HCT116 (cell line): ENCODE measurements at regions of chr6 and their contacts with region 1.

Region 1: GRCh38 chr6:2634139-2634964 is 116.4 kb downstream of the MYLK4 start:
- DNase-seq: peak; percentile 75
- ATAC-seq: peak; percentile 80
- H3K4me3 ChIP-seq: peak overlapping the region; percentile 37 to 52
- H3K27ac ChIP-seq: peak overlapping the region; percentile 73
- H3K4me1 ChIP-seq: peaks cover 46 to 61% of the 10 kb centered on the region in 2 experiments
- H3K27me3 ChIP-seq: no peaks in the 10 kb centered on the region
- CTCF ChIP-seq: peak in 2 of 3 experiments; percentile 95 to 96; a peak in 4 of 6 replicates
- POLR2A ChIP-seq: no peak
- RAD21 ChIP-seq: no peak

Region 2: DNA sequence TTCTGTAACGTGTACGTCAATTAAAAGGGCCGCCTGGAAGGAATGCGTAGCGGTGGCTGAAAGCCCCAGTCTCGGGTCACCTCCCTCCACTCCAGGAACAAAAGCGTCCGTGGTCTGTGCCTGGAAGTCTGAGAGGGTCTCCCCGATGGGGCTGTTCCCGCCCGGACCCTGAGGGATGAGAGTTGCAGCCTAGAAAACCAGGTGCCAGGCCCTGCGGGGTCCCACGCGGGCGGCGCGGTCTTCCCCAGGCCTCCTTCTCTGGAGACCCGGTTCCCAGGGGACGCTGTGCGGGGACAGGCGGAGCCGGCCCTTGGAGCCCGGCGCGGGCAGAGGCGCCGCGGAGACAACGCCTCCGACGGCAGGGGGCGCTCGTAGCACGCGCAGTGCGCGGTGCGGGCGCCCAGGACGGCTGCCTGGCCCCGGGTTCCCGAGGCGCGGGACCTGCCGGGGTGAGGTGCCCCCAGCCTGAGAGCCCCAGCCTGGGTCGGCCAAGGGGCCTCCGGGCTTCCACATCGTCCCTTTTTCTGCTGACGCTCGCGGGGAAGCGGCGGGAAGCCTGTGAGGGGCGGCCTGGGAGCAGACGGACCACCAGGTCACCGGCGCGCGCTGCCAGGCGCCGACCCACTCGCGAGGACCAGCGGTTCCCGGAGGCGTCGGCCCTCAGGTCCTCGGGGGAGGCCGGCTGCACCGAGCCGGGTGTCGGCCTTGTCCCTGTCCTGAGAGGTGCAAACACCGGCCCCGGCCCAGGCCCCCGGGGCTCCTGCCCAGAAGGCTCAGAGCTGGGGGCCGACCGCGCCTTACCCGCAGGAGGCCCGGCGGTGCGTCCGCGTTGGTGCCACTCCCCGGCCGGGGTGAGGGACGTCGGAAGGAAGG is 1030.0 kb before region 1 on chr6:
- CTCF ChIA-PET with region 1: interaction called, 6 read pairs
- POLR2A ChIA-PET with region 1: no interaction called
- RAD21 ChIA-PET with region 1: no interaction called
- intact Hi-C with region 1: loop called (anchors 1 kb)
- DNase-seq: no peak
- ATAC-seq: peak; percentile 93
- H3K4me3 ChIP-seq: peak overlapping the region; percentile 35 to 53
- H3K27ac ChIP-seq: no peak overlapping the region; the same call in 1 of the 2 replicates
- H3K4me1 ChIP-seq: peaks cover 0 to 16% of the 10 kb centered on the region in 2 experiments; a peak in 3 of 4 replicates
- H3K27me3 ChIP-seq: no peaks in the 10 kb centered on the region
- CTCF ChIP-seq: peak; percentile 77 to 84 (median 77)
- POLR2A ChIP-seq: no peak
- RAD21 ChIP-seq: peak; percentile 95

Region 3: DNA sequence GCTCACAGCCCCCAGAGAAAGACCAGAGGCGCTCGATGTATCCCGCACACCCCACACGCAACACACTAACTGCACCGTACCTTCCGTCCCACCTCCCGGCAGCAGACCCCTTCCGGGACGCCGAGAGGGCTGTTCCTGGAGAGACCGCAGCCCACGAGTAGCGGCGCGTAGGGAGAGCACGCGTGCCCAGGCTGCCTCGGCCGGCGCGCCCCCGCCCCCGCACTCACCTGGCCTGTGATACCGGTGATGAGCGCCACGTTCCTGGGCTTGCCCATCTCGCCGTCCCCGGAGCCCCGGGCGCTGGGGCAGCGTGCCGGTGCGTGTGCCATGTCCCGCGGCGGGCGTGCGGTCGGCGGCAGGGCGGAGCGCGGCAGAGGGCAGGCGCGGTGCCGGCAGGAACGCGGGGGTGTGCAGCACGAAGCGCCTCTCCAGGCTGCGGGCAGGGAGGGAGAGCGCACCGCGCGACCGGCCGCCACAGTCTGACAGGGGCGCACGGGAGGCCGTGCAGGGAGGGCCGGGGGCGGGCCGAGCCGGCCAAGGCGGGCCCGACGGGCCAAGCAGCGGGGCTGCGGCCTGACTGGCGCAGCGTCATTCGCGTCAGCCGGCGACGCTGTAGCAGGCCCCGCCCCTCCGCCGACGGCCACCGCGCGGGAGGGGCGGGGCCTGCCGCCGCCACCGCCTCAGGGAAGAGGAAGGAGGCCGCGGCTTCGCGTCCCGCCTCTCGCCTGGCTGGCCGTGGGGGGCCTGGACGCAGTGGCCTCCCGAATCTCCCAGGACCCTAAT is 389.1 kb before region 1 on chr6 and contains the start of gene GMDS:
- CTCF ChIA-PET with region 1: no interaction called
- POLR2A ChIA-PET with region 1: no interaction called
- RAD21 ChIA-PET with region 1: no interaction called
- intact Hi-C with region 1: loop called (anchors 5 kb)
- DNase-seq: peak; percentile 43
- ATAC-seq: peak; percentile 96
- H3K4me3 ChIP-seq: peak within 1 kb of the TSS; percentile 67 to 72
- H3K27ac ChIP-seq: peak within 1 kb of the TSS; percentile 68
- H3K4me1 ChIP-seq: peaks cover 4 to 13% of the 10 kb centered on the region in 2 experiments; a peak in 3 of 4 replicates
- H3K27me3 ChIP-seq: no peaks in the 10 kb centered on the region
- CTCF ChIP-seq: no peak
- POLR2A ChIP-seq: no peak
- RAD21 ChIP-seq: no peak
- total RNA-seq, gene GMDS: 34.4 TPM

Region 4: DNA sequence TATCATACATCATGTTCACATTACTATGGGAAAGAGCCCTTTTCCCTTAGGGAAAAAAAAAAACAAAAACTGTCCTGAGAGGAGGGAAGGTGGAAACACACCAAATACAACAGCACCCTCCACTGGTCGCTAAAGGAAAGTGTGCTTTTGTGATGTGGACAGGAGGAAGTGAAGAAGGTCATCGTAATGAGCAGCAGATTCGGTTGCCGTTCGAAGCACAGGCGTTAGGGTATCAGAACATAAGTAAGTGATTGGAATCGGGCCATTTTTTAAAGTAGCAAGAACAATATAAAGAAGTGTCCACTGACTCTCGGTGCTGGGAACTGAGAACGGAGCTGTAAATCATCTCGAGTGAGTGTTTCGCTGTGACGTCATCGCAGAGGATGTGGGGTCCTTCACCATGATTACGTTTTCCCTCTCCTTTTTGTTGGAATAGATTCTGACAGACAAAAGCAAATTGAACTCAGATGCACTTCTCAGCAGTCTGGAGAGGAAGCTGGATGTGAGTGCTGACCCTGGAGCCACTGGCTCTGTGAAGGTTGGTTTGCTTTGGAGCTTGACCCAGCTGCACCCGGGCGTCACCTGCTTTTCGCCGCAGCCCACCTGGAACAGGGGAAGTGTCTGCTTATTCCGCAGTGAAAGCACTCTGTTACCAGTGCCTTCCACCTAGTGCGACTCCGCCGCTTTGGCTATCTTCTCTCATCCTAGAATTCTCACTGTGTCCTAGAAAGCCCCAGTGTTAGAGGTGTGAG is 185.4 kb before region 1 on chr6:
- CTCF ChIA-PET with region 1: interaction called, 5 read pairs
- POLR2A ChIA-PET with region 1: no interaction called
- RAD21 ChIA-PET with region 1: interaction called in 1 of 2 experiments, 3 read pairs
- intact Hi-C with region 1: loop called (anchors 1 kb)
- DNase-seq: peak; percentile 59
- ATAC-seq: peak; percentile 89
- H3K4me3 ChIP-seq: no peak overlapping the region
- H3K27ac ChIP-seq: no peak overlapping the region
- H3K4me1 ChIP-seq: peaks cover 0 to 4% of the 10 kb centered on the region in 2 experiments; a peak in 1 of 4 replicates
- H3K27me3 ChIP-seq: no peaks in the 10 kb centered on the region
- CTCF ChIP-seq: peak; percentile 69 to 83 (median 83)
- POLR2A ChIP-seq: no peak
- RAD21 ChIP-seq: peak; percentile 94

Region 5: GRCh38 chr6:2646346-2646745 is 12.0 kb after region 1 on chr6:
- CTCF ChIA-PET with region 1: interaction called, 15 read pairs
- POLR2A ChIA-PET with region 1: interaction called, 6 read pairs
- RAD21 ChIA-PET with region 1: no interaction called
- intact Hi-C with region 1: no loop called
- DNase-seq: no peak
- ATAC-seq: no peak
- H3K4me3 ChIP-seq: no peak overlapping the region
- H3K27ac ChIP-seq: no peak overlapping the region
- H3K4me1 ChIP-seq: no peaks in the 10 kb centered on the region
- H3K27me3 ChIP-seq: no peaks in the 10 kb centered on the region
- CTCF ChIP-seq: no peak
- POLR2A ChIP-seq: no peak
- RAD21 ChIP-seq: no peak